Activated naive CD4-positive, alpha-beta T cell treated with anti-CD3 and anti-CD28 coated beads for 36 hours (primary cell): ENCODE measurements at regions of chr1 and their contacts with region 1.

Region 1: DNA sequence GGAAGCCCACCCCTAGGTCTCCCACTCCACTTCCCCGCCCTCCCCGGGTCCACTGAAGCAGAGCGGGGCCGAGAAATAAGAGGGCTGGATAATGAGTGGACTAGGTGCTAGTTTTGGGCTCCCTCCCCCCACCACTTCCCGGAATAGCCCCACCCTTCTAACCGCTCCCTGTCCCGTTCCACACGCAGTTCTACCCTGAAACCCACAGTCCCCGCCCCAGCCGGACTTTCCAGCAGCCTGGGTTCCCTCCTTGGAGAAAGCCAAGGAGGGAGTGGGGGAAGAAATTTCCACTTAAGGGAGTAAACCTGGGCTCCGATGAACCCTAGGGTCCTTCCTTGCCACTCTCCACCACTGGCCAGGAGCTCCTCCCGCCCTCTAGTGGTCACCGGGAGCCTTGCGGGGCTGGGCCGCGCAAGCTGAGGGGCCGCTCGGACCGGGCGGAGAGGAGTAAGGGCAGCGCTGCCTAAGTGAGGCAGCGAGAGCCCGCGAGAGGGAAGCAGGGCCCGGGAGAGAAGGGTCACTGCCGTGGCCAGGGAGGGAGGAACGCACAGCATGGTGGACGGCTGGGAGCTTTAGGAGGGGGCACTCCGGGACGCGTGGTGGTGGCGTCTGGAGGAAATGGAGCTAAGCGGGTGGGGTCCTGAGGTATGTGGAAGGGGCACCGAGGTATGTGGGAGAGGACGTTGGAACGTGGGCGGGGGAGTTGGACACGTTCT is 14.3 kb downstream of the THBS3 start:
- DNase-seq: peak; percentile 86
- H3K4me3 Mint-ChIP-seq: peak overlapping the region; percentile 93
- H3K27ac Mint-ChIP-seq: peak overlapping the region; percentile 96
- H3K4me1 Mint-ChIP-seq: peaks cover 27% of the 10 kb centered on the region
- H3K27me3 Mint-ChIP-seq: no peaks in the 10 kb centered on the region

Region 2: DNA sequence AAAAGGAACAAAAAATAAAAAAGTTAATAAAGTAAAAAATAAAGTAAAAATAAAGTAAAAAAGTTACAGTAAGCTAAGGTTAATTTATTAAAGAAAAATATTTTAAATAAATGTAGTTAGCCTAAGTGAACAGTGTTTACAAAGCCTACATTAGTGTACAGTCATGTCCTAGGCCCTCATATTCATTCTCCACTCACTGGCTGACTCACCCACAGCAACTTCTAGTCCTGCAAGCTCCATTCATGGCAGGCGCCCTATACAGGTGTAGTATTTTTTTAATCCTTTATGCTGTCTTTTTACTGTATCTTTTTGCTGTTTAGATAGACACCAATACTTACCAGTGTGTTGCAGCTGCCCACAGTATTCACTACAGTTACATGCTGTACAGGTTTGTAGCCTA is 597.8 kb before region 1 on chr1:
- CTCF ChIA-PET with region 1: no interaction called
- intact Hi-C with region 1: no loop called
- DNase-seq: no peak
- H3K4me3 Mint-ChIP-seq: no peak overlapping the region
- H3K27ac Mint-ChIP-seq: no peak overlapping the region
- H3K4me1 Mint-ChIP-seq: peaks cover 19% of the 10 kb centered on the region
- H3K27me3 Mint-ChIP-seq: no peaks in the 10 kb centered on the region

Region 3: GRCh38 chr1:155113450-155113990 is 79.9 kb before region 1 on chr1:
- CTCF ChIA-PET with region 1: no interaction called
- intact Hi-C with region 1: no loop called
- DNase-seq: no peak
- H3K4me3 Mint-ChIP-seq: no peak overlapping the region
- H3K27ac Mint-ChIP-seq: no peak overlapping the region
- H3K4me1 Mint-ChIP-seq: no peaks in the 10 kb centered on the region
- H3K27me3 Mint-ChIP-seq: no peaks in the 10 kb centered on the region

Region 4: DNA sequence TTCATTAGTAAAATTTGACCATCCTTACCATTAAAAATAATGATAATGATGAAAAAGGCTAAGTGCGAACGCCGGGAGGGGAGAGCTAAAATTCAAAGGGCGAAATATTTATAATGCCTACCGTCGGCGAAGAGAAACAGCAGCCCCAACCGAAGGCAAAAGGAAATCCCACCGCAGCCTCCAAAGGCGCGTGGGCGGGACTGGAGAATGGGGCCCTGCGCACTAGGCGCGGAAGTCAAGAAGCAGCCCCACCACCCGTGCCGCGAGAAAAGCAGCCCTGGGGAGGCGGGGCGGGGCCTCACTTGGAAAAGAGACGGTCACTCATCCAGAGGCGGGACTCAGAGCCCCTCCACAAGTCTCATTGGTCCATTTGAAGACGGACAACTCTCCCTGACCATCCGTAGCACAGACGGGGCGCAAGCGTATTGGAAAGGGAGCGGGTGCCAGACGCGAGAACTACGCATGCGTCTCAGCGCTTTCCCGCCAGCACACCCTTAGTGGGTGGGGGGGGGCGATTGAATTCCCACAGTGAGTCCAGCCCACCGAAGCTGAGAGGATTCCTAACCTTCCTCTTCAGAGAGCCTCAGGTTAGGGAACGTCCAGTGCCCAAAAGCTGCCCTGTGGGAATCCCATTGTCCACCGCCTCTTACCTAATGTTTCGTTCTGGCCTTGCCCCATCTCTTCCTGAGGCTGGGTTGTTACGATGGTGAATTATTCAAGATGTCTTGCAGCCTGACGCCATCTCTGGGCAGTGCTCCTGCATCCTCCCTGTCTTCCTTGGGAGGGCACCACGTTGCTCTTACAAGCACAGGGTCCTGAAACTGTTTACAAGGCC is 34.0 kb after region 1 on chr1:
- CTCF ChIA-PET with region 1: interaction called, 10 read pairs
- intact Hi-C with region 1: loop called (anchors 1 kb)
- DNase-seq: peak; percentile 100
- H3K4me3 Mint-ChIP-seq: peak overlapping the region; percentile 89
- H3K27ac Mint-ChIP-seq: peak overlapping the region; percentile 96
- H3K4me1 Mint-ChIP-seq: peaks cover 31% of the 10 kb centered on the region
- H3K27me3 Mint-ChIP-seq: no peaks in the 10 kb centered on the region